GM12878 (cell line): ENCODE measurements at regions of chr7 and their contacts with region 1.

Region 1: DNA sequence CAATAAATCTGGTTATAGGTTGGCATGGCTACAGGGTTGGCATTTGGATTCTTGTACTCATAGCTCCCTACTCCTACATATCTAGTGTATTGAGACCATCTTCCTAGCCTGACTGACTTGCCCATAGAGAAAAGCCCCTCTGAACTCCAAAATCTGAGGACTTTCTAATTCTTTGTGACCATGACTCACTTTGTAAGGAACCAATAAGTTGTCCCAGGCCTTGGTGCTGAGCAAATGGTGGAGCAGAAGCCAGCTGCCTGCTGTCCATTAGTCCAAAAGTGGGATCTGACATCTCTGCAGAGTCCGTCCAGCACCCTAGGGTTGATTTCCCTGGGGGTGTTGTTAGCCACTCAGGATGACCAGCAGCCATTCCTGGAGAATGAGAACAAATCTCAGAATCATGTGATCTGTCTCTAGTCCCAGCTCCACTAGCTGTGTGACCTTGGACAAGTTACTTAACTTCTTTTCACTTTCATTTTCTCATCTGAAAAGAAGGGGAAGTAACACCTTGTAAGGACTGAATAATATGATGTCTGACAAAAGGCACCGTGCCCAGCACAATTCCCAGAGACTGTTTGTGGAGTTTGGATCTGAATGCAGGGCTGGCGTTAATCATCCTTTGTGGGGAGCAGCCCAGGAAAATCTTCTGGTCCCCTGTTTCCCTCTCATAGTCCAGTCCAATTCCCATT is 44.1 kb downstream of the MTURN start:
- DNase-seq: peak; percentile 61
- ATAC-seq: peak; percentile 90
- H3K4me3 ChIP-seq: peak overlapping the region; percentile 45
- H3K27ac ChIP-seq: peak overlapping the region; percentile 87
- H3K4me1 ChIP-seq: peaks cover 25% of the 10 kb centered on the region
- H3K27me3 ChIP-seq: no peaks in the 10 kb centered on the region
- CTCF ChIP-seq: no peak
- EP300 ChIP-seq: no peak
- POLR2A ChIP-seq: no peak
- RAD21 ChIP-seq: no peak

Region 2: GRCh38 chr7:30001998-30002397 is 176.9 kb before region 1 on chr7:
- CTCF ChIA-PET with region 1: no interaction called
- POLR2A ChIA-PET with region 1: no interaction called
- RAD21 ChIA-PET with region 1: no interaction called
- SMC1A ChIA-PET with region 1: no interaction called
- in situ Hi-C with region 1: no loop called
- intact Hi-C with region 1: no loop called
- DNase-seq: no peak
- ATAC-seq: no peak
- H3K4me3 ChIP-seq: no peak overlapping the region
- H3K27ac ChIP-seq: no peak overlapping the region
- H3K4me1 ChIP-seq: no peaks in the 10 kb centered on the region
- H3K27me3 ChIP-seq: no peaks in the 10 kb centered on the region
- CTCF ChIP-seq: no peak
- EP300 ChIP-seq: no peak
- POLR2A ChIP-seq: no peak
- RAD21 ChIP-seq: no peak

Region 3: GRCh38 chr7:30074422-30075030 is 104.4 kb before region 1 on chr7:
- CTCF ChIA-PET with region 1: no interaction called
- POLR2A ChIA-PET with region 1: no interaction called
- RAD21 ChIA-PET with region 1: no interaction called
- SMC1A ChIA-PET with region 1: no interaction called
- in situ Hi-C with region 1: no loop called
- intact Hi-C with region 1: no loop called
- DNase-seq: no peak
- ATAC-seq: peak; percentile 57
- H3K4me3 ChIP-seq: no peak overlapping the region
- H3K27ac ChIP-seq: no peak overlapping the region
- H3K4me1 ChIP-seq: no peaks in the 10 kb centered on the region
- H3K27me3 ChIP-seq: no peaks in the 10 kb centered on the region
- CTCF ChIP-seq: peak; percentile 41 to 55 (median 55); a peak in 3 of 6 replicates
- EP300 ChIP-seq: no peak
- POLR2A ChIP-seq: no peak
- RAD21 ChIP-seq: peak; percentile 40; the same call in 1 of the 2 replicates

Region 4: DNA sequence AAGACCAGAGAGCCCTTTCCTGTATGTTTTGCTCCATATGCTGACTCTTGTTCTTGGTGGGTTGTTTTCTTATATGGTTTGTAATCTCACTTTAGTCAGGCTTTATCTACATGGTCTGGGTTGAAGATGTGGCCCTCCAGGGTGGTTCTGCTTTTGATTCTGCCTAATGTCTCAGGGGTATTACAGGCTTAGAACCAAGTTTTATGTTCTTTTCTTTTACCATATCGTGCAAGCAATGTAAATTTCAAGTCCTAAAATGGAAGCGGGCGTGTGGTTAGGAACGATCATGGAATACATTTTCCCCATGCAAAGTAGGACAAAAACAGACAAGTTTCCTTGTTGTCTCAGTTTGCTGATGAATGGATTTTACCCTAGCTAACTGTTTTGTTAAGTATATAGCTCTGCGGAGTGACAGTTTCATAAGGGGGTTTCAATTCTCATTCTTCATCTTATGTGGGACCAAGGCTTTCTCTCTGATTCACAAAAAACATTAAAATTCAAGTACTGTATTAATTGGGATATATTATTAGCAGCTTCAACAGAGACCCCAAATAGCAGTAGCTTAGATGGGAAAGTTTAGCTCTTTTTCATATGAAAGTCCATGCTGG is 14.5 kb after region 1 on chr7:
- CTCF ChIA-PET with region 1: interaction called, 16 read pairs
- POLR2A ChIA-PET with region 1: interaction called, 12 read pairs
- RAD21 ChIA-PET with region 1: interaction called, 12 read pairs
- SMC1A ChIA-PET with region 1: interaction called, 87 read pairs
- in situ Hi-C with region 1: no loop called
- intact Hi-C with region 1: no loop called
- DNase-seq: no peak
- ATAC-seq: peak; percentile 87
- H3K4me3 ChIP-seq: no peak overlapping the region
- H3K27ac ChIP-seq: no peak overlapping the region
- H3K4me1 ChIP-seq: no peaks in the 10 kb centered on the region
- H3K27me3 ChIP-seq: no peaks in the 10 kb centered on the region
- CTCF ChIP-seq: no peak
- EP300 ChIP-seq: no peak
- POLR2A ChIP-seq: no peak
- RAD21 ChIP-seq: no peak

Region 5: DNA sequence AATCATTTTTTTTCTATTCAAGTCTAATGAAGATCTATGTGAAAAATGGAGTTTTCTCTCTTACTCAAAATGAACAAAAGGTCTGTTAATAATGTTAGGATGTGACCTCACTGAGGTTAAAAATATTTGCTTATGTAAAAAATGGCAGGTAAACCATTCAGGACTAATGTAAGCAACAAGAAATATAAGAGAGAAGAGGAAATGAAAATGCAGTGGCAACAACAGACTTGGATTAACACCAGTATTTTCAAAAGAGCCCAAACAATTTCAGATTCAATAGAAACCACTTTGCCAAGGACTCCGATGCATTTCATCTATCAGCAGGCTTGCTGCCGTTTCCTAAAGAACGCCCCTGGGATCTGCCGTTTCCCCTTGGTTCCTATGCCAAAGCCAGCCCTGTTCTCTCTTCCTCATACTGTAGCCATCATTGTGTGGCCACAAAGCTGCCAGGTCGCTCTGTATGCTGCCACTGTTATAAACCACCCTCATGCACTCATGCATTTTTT is 22.3 kb after region 1 on chr7:
- CTCF ChIA-PET with region 1: interaction called, 5 read pairs
- POLR2A ChIA-PET with region 1: interaction called, 6 read pairs
- RAD21 ChIA-PET with region 1: interaction called, 22 read pairs
- SMC1A ChIA-PET with region 1: interaction called, 80 read pairs
- in situ Hi-C with region 1: no loop called
- intact Hi-C with region 1: loop called (anchors 2 kb)
- DNase-seq: peak; percentile 51
- ATAC-seq: peak; percentile 92
- H3K4me3 ChIP-seq: 0 out of 2 replicates have a peak overlapping the region, but pooled peaks have one; percentile 14
- H3K27ac ChIP-seq: peak overlapping the region; percentile 17; the same call in 1 of the 2 replicates
- H3K4me1 ChIP-seq: peaks cover 19% of the 10 kb centered on the region
- H3K27me3 ChIP-seq: no peaks in the 10 kb centered on the region
- CTCF ChIP-seq: no peak
- EP300 ChIP-seq: peak; percentile 76 to 80; a peak in 2 of 4 replicates
- POLR2A ChIP-seq: no peak
- RAD21 ChIP-seq: no peak

Region 6: DNA sequence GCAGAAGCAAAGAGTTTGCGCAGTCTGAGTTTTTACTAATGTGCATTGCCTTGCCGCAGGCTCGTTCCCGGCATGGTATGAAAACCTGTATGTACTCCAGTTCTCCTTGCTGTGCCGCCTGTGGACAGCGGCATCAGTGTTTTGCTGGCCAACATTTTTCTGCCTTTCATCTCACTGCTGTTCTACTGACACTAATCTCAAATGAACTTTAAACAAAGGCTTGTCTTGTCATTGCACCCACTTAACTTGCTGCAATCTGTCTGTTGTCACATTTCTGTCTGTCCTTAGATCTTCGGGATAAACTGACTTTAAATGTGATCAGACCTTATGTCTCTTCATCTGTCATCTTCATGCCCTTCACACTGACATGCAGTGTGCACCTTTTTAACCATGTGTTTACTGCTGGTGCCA is 33.8 kb after region 1 on chr7:
- CTCF ChIA-PET with region 1: interaction called, 7 read pairs
- POLR2A ChIA-PET with region 1: interaction called, 5 read pairs
- RAD21 ChIA-PET with region 1: interaction called, 6 read pairs
- SMC1A ChIA-PET with region 1: interaction called, 44 read pairs
- in situ Hi-C with region 1: no loop called
- intact Hi-C with region 1: loop called (anchors 5 kb)
- DNase-seq: no peak
- ATAC-seq: no peak
- H3K4me3 ChIP-seq: no peak overlapping the region
- H3K27ac ChIP-seq: no peak overlapping the region
- H3K4me1 ChIP-seq: peaks cover 12% of the 10 kb centered on the region; the same call in 1 of the 2 replicates
- H3K27me3 ChIP-seq: no peaks in the 10 kb centered on the region
- CTCF ChIP-seq: no peak
- EP300 ChIP-seq: no peak
- POLR2A ChIP-seq: no peak
- RAD21 ChIP-seq: no peak

Region 7: DNA sequence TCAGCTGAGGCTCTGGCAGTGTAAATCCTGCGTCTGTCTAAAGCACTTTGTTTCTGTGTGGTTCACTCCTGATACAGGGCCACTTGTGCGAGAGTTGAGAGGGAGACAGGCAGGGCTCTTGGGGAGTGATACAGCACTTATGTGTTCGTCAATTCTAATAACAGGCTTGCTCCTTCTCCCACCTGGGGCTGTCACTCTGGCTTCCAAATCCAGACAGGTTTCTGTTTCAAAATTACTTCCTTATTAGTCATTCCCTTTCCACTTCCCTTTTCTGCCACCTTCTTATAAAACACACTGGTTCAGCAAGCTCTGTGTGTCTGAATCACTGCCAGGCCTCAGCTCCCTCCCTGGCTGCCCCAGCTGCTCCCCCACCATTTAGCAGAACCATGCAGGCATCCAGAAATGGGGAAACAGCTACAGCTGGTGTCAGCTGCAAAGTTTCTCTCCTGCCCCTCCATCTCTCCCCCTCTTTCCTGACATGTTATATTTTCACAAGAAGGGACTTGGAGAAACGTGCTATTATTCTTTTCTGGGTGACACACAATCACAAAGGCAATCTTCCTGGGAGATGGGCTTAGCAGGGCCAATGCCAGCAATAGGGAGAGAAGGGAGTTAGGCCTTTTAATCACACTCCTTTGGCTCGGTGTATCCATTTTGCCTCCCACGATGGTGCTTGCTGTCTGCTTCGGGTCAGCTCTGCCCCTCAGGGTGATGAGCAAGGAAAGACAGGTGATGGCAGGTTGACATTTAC is 47.1 kb after region 1 on chr7:
- CTCF ChIA-PET with region 1: interaction called, 12 read pairs
- POLR2A ChIA-PET with region 1: interaction called, 5 read pairs
- RAD21 ChIA-PET with region 1: interaction called, 11 read pairs
- SMC1A ChIA-PET with region 1: interaction called, 41 read pairs
- in situ Hi-C with region 1: no loop called
- intact Hi-C with region 1: no loop called
- DNase-seq: peak; percentile 79
- ATAC-seq: peak; percentile 91
- H3K4me3 ChIP-seq: no peak overlapping the region
- H3K27ac ChIP-seq: peak overlapping the region; percentile 29; the same call in 1 of the 2 replicates
- H3K4me1 ChIP-seq: peaks cover 25% of the 10 kb centered on the region
- H3K27me3 ChIP-seq: no peaks in the 10 kb centered on the region
- CTCF ChIP-seq: no peak
- EP300 ChIP-seq: peak; percentile 83 to 91
- POLR2A ChIP-seq: no peak
- RAD21 ChIP-seq: no peak

Region 8: GRCh38 chr7:30238721-30239441 is 60.0 kb after region 1 on chr7:
- CTCF ChIA-PET with region 1: no interaction called
- POLR2A ChIA-PET with region 1: interaction called, 4 read pairs
- RAD21 ChIA-PET with region 1: interaction called, 5 read pairs
- SMC1A ChIA-PET with region 1: interaction called, 12 read pairs
- in situ Hi-C with region 1: no loop called
- intact Hi-C with region 1: no loop called
- DNase-seq: peak; percentile 75
- ATAC-seq: peak; percentile 83
- H3K4me3 ChIP-seq: no peak overlapping the region; the same call in 1 of the 2 replicates
- H3K27ac ChIP-seq: peak overlapping the region; percentile 9; the same call in 1 of the 2 replicates
- H3K4me1 ChIP-seq: peaks cover 27% of the 10 kb centered on the region
- H3K27me3 ChIP-seq: no peaks in the 10 kb centered on the region
- CTCF ChIP-seq: no peak
- EP300 ChIP-seq: peak in 1 of 2 experiments; percentile 67; a peak in 2 of 4 replicates
- POLR2A ChIP-seq: no peak
- RAD21 ChIP-seq: no peak

Region 9: GRCh38 chr7:30445770-30446169 is 266.9 kb after region 1 on chr7:
- CTCF ChIA-PET with region 1: interaction called, 3 read pairs
- POLR2A ChIA-PET with region 1: no interaction called
- RAD21 ChIA-PET with region 1: no interaction called
- SMC1A ChIA-PET with region 1: interaction called, 4 read pairs
- in situ Hi-C with region 1: no loop called
- intact Hi-C with region 1: loop called (anchors 5 kb)
- DNase-seq: peak; percentile 82
- ATAC-seq: peak; percentile 99
- H3K4me3 ChIP-seq: no peak overlapping the region
- H3K27ac ChIP-seq: no peak overlapping the region
- H3K4me1 ChIP-seq: peaks cover 4% of the 10 kb centered on the region
- H3K27me3 ChIP-seq: no peaks in the 10 kb centered on the region
- CTCF ChIP-seq: peak; percentile 68 to 71 (median 70)
- EP300 ChIP-seq: peak in 1 of 2 experiments; percentile 60; a peak in 2 of 4 replicates
- POLR2A ChIP-seq: no peak
- RAD21 ChIP-seq: peak; percentile 81